Lower leg skin (tissue), 4 donors: ENCODE measurements at regions of chr9 and their contacts with region 1.

Region 1: DNA sequence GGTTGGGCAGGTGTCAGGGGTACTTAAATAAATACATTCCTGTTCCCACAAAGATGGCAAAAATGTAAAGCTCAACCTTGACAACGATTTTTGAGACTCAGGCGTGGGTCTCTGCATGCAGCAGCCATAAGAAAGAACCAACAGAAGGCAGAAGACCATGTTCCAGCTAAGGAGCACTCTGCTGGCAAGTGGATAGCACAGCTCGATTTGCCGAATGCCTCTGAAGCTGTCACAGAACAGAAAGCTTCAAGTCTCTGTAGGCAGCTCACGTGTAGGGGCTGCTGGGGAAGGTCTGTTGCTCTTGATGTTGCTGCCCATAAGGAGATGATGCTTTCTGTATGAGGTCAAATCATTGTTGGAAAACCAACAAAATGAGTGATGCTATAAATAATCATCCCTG is 119.6 kb upstream of the GRIN3A start:
- DNase-seq: no peak
- H3K4me3 ChIP-seq: no peak overlapping the region
- CTCF ChIP-seq: no peak
- POLR2A ChIP-seq: no peak

Region 2: DNA sequence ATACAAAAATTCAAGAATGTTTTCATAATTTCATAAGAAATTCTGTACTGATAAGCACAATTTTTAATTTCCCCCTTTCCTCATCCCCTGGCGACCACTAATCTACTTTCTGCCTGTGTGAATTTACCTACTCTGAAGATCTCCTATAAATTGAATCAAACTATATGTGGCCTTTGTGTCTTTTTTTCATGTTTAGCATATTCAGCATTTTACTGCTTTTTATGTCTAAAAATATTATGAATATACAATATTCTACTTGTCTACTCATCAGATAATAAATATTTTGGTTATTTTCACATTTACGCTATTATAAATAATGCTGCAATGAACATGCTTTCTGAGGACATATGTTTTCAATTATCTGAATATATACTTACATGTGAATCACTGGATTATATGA is 1281.9 kb after region 1 on chr9:
- intact Hi-C with region 1: loop called (anchors 10 kb)
- DNase-seq: no peak
- H3K4me3 ChIP-seq: no peak overlapping the region
- CTCF ChIP-seq: no peak
- POLR2A ChIP-seq: no peak